ENCODE measurements at regions of chr4 and their contacts with region 1.

Region 1: DNA sequence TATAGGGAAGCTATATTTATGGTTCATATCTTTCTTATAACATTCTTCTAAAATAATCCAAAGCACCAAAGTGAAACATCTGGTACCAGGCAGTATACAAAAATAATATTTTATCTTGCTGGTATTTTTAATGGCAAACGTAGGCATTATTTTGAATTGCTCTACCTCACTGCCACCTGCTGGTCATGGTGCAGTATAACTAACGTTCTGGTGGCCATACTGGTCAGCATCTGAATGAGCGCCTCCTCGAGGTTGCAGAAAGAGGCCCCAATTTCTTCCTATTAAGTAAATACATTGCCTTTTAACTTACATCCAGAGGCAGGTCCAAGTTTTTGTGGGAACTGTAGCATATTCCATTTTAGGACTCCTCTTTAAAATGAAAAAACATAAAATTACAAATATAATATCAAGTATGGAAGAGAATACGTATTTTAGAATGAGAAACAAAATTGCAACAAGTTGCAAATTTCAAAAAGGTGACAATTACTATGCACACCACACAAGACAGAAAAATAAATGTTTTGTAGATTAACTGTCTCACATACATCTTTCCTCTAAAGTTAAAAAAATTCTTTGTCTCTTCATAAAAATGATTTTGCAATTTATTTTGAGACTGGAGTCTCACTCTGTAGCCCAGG is 22.9 kb upstream of the CWH43 start:
- DNase-seq: peak; percentile 77
- H3K4me3 Mint-ChIP-seq: no peak overlapping the region
- H3K27ac Mint-ChIP-seq: no peak overlapping the region
- H3K4me1 Mint-ChIP-seq: no peaks in the 10 kb centered on the region
- H3K27me3 Mint-ChIP-seq: no peaks in the 10 kb centered on the region

Region 2: DNA sequence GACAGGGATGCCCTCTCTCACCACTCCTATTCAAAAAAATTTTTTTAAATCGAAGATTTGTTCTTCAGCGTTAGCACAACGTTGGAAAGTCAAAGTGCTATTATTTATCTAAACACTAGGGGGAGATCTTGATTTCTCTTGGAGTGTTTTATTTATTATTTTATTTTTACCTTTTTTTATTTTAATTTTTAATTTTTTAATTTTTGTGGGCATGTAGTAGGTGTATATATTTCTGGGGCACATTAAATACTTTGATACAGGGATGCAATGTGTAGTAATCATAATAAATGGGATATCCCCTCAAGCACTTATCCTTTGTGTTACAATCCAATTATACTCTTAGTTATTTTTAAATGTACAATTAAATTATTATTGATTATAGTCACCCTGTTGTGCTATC is 517.5 kb before region 1 on chr4:
- CTCF ChIA-PET with region 1: interaction called, 3 read pairs
- POLR2A ChIA-PET with region 1: no interaction called
- intact Hi-C with region 1: loop called (anchors 1 kb)
- DNase-seq: no peak
- H3K4me3 Mint-ChIP-seq: no peak overlapping the region
- H3K27ac Mint-ChIP-seq: no peak overlapping the region
- H3K4me1 Mint-ChIP-seq: no peaks in the 10 kb centered on the region
- H3K27me3 Mint-ChIP-seq: peaks cover 7% of the 10 kb centered on the region

Region 3: GRCh38 chr4:48578132-48578968 is 384.8 kb before region 1 on chr4:
- CTCF ChIA-PET with region 1: interaction called, 39 read pairs
- POLR2A ChIA-PET with region 1: no interaction called
- intact Hi-C with region 1: loop called (anchors 1 kb)
- DNase-seq: peak; percentile 37
- H3K4me3 Mint-ChIP-seq: no peak overlapping the region
- H3K27ac Mint-ChIP-seq: no peak overlapping the region
- H3K4me1 Mint-ChIP-seq: peaks cover 4% of the 10 kb centered on the region
- H3K27me3 Mint-ChIP-seq: no peaks in the 10 kb centered on the region

Region 4: GRCh38 chr4:48830706-48831531 is 132.2 kb before region 1 on chr4 and contains the start of gene OCIAD1:
- CTCF ChIA-PET with region 1: no interaction called
- POLR2A ChIA-PET with region 1: no interaction called
- intact Hi-C with region 1: loop called (anchors 10 kb)
- DNase-seq: peak; percentile 97
- H3K4me3 Mint-ChIP-seq: peak within 1 kb of the TSS; percentile 100
- H3K27ac Mint-ChIP-seq: peak within 1 kb of the TSS; percentile 99
- H3K4me1 Mint-ChIP-seq: peaks cover 19% of the 10 kb centered on the region
- H3K27me3 Mint-ChIP-seq: peaks cover 2% of the 10 kb centered on the region
- total RNA-seq, gene OCIAD1: 100 to 107 TPM